ENCODE measurements at regions of chr11 and their contacts with region 1.

Region 1: GRCh38 chr11:67353317-67354074 is at the start of gene POLD4:
- DNase-seq: peak; percentile 90 to 99
- H3K4me3 ChIP-seq: peak within 1 kb of the TSS; percentile 93
- H3K27ac ChIP-seq: peak within 1 kb of the TSS; percentile 90
- H3K4me1 ChIP-seq: peaks cover 70% of the 10 kb centered on the region
- H3K27me3 ChIP-seq: no peaks in the 10 kb centered on the region
- CTCF ChIP-seq: peak; percentile 24; the same call in 1 of the 2 replicates
- total RNA-seq, gene POLD4: 67.1 and 83.7 TPM in 2 replicates

Region 2: DNA sequence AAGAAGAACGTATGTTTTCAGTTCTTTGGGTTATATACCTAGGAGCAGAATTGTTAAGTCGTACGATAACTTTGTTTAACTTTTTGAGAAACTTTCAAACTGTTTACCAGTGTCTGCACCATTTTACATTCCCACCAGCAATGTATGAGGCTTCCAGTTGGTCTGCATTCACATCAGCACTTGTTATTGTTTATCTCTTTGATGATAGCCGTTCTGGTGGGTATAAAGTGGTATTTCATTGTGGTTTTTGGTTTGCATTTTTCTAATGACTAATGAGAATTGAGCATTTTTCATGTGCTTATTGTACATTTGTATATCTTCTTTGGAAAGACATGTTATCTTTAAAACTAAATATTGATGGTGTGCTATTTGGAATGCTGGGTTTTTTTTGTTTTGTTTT is 174.6 kb before region 1 on chr11:
- CTCF ChIA-PET with region 1: no interaction called
- POLR2A ChIA-PET with region 1: no interaction called
- intact Hi-C with region 1: no loop called
- DNase-seq: no peak
- H3K4me3 ChIP-seq: no peak overlapping the region
- H3K27ac ChIP-seq: no peak overlapping the region
- H3K4me1 ChIP-seq: peaks cover 8% of the 10 kb centered on the region
- H3K27me3 ChIP-seq: no peaks in the 10 kb centered on the region
- CTCF ChIP-seq: no peak

Region 3: GRCh38 chr11:67239783-67240575 is 113.5 kb before region 1 on chr11:
- CTCF ChIA-PET with region 1: no interaction called
- POLR2A ChIA-PET with region 1: interaction called, 17 read pairs
- intact Hi-C with region 1: no loop called
- DNase-seq: peak; percentile 99
- H3K4me3 ChIP-seq: peak overlapping the region; percentile 82
- H3K27ac ChIP-seq: peak overlapping the region; percentile 80
- H3K4me1 ChIP-seq: peaks cover 54% of the 10 kb centered on the region
- H3K27me3 ChIP-seq: no peaks in the 10 kb centered on the region
- CTCF ChIP-seq: no peak

Region 4: DNA sequence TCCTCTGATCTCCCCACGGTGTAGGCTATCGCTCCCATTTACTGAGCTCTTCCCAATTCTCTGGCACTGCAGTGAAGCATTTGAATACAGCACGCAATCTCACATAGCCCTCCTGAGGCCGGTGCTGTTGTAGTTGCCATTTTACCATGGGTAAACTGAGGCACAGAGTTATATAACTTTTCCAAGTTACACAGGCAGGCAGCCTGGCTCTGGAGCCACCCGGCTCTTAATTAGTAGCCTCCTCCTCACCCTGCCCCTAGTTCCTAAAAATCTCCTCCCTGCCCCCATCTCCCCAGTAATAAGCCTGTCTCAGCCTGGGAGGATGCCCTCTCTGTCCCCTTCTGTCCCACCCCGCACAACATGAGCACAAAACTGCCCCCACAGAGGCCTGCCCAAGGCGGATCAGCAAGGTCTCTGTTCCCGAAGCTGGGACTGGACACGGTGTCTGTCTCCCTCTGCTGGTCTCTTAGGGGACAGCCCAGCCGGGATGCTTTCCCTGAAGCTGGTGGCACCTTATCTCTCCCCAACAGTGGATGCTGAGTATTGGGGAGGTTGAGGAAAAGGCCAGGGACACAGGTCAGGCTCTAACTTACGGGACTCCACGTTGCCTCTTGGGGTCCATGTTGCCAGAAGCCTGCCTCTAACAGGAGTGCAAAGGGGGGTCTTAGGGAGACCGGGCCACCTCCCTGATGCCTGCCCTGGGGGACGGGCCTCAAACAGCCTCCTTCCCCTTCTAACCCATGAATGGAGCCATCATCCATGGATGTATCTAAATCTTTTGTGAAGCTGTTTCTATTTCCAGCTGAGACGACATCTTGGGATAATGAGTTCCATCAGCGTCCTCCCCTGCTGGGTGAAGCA is 29.0 kb after region 1 on chr11:
- CTCF ChIA-PET with region 1: interaction called, 174 read pairs
- POLR2A ChIA-PET with region 1: interaction called, 11 read pairs
- intact Hi-C with region 1: loop called (anchors 1 kb)
- DNase-seq: peak; percentile 66 to 84
- H3K4me3 ChIP-seq: no peak overlapping the region
- H3K27ac ChIP-seq: no peak overlapping the region
- H3K4me1 ChIP-seq: peaks cover 64% of the 10 kb centered on the region
- H3K27me3 ChIP-seq: no peaks in the 10 kb centered on the region
- CTCF ChIP-seq: peak; percentile 99

Region 5: GRCh38 chr11:67439321-67439883 is 85.9 kb after region 1 on chr11:
- CTCF ChIA-PET with region 1: no interaction called
- POLR2A ChIA-PET with region 1: interaction called, 14 read pairs
- intact Hi-C with region 1: no loop called
- DNase-seq: peak in 1 of 2 experiments; percentile 52
- H3K4me3 ChIP-seq: no peak overlapping the region
- H3K27ac ChIP-seq: no peak overlapping the region
- H3K4me1 ChIP-seq: peaks cover 10% of the 10 kb centered on the region
- H3K27me3 ChIP-seq: no peaks in the 10 kb centered on the region
- CTCF ChIP-seq: peak; percentile 41; the same call in 1 of the 2 replicates

Region 6: DNA sequence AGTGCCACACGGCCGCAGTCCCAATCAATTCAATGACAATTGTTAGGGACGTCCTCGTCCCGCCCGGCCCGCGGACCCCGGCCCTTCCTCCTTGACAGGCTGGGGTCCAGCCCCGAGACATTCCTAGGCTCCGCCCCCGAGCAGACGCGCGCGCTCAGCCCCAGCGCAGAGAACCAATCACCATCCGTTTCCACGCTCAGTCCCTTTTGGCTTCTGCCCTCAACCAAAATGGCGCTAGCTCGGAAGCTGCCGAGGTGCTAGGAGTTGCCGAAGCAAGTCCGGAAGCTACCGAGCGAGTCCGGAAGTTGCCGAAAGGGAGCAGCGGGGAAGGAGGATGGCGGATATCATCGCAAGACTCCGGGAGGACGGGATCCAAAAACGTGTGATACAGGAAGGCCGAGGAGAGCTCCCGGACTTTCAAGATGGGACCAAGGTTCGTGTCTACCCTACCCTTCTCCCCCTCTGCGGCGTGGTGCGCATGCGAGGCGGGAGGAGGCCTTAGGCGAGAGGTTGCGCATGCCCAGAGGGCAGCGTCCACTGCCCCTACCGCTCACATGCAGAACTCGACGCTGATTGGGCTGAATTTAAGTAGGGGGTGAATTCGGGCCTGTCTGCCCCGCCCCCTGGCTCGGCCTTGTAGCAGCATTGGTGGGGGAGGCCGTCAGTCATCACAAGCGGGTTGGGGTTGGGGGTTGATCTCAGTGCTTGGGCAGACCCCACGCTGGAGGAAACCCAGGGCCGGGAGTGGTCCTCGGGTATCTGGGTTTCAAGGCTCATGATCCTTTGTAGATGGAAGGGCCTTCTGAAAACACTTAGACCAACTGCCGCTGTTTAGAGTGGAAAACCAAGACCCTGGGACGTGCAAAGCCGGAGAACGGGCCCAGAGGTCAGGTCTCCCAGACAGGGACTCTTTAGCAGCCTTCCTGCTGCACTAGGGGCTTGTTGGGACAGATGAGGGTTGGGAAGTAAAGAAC is 129.6 kb after region 1 on chr11 and contains the start of gene AIP:
- CTCF ChIA-PET with region 1: no interaction called
- POLR2A ChIA-PET with region 1: interaction called, 22 read pairs
- intact Hi-C with region 1: no loop called
- DNase-seq: peak; percentile 96 to 98
- H3K4me3 ChIP-seq: peak within 1 kb of the TSS; percentile 61
- H3K27ac ChIP-seq: peak within 1 kb of the TSS; percentile 34
- H3K4me1 ChIP-seq: peaks cover 17% of the 10 kb centered on the region
- H3K27me3 ChIP-seq: no peaks in the 10 kb centered on the region
- CTCF ChIP-seq: peak; percentile 34; the same call in 1 of the 2 replicates
- total RNA-seq, gene AIP: 95.3 and 125 TPM in 2 replicates

Region 7: DNA sequence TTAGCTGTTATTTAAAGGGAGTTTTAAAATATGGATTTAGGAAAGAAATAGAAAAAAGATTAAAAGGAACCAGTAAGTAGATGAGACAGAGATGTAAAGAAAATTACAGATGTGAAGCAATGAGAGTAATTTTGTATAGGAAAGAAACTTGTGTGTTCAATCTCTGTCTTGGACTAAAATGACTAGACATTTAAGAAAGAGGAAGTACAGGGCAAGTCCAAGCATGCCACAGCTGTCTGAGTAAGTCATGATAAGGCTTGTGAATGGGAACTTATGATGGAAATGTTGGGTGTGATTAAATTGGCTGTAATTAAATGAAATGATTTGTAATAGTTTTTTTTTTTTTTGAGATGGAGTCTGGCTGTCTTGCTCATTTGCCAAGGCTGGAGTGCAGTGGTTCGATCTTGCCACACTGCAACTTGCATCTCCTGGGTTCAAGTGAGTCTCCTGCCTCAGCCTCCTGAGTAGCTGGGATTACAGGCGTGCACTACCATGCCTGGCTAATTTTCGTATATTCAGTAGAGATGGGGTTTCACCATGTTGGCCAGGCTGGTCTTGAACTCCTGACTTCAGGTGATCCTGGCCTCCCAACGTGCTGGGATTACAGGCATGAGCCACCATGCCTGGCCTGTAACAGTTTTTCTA is 302.9 kb after region 1 on chr11:
- CTCF ChIA-PET with region 1: no interaction called
- POLR2A ChIA-PET with region 1: no interaction called
- intact Hi-C with region 1: loop called (anchors 5 kb)
- DNase-seq: no peak
- H3K4me3 ChIP-seq: no peak overlapping the region
- H3K27ac ChIP-seq: no peak overlapping the region
- H3K4me1 ChIP-seq: no peaks in the 10 kb centered on the region
- H3K27me3 ChIP-seq: no peaks in the 10 kb centered on the region
- CTCF ChIP-seq: no peak

Region 8: GRCh38 chr11:67996622-67997474 is 643.4 kb after region 1 on chr11:
- CTCF ChIA-PET with region 1: no interaction called
- POLR2A ChIA-PET with region 1: no interaction called
- intact Hi-C with region 1: no loop called
- DNase-seq: peak in 1 of 2 experiments; percentile 61
- H3K4me3 ChIP-seq: no peak overlapping the region
- H3K27ac ChIP-seq: no peak overlapping the region
- H3K4me1 ChIP-seq: no peaks in the 10 kb centered on the region
- H3K27me3 ChIP-seq: no peaks in the 10 kb centered on the region
- CTCF ChIP-seq: no peak